PC-3 (cell line): ENCODE measurements at regions of chr12 and their contacts with region 1.

Region 1: GRCh38 chr12:39252628-39253027 is 190.3 kb downstream of the KIF21A start:
- DNase-seq: no peak
- ATAC-seq: no peak
- H3K4me3 ChIP-seq: no peak overlapping the region
- H3K27ac ChIP-seq: no peak overlapping the region
- H3K4me1 ChIP-seq: no peaks in the 10 kb centered on the region
- H3K27me3 ChIP-seq: no peaks in the 10 kb centered on the region
- CTCF ChIP-seq: no peak

Region 2: GRCh38 chr12:39145175-39145999 is 107.2 kb before region 1 on chr12:
- CTCF ChIA-PET with region 1: interaction called, 6 read pairs
- POLR2A ChIA-PET with region 1: no interaction called
- intact Hi-C with region 1: loop called (anchors 5 kb)
- DNase-seq: peak; percentile 70
- ATAC-seq: peak; percentile 99
- H3K4me3 ChIP-seq: peak overlapping the region; percentile 67
- H3K27ac ChIP-seq: no peak overlapping the region
- H3K4me1 ChIP-seq: peaks cover 3% of the 10 kb centered on the region; the same call in 1 of the 2 replicates
- H3K27me3 ChIP-seq: no peaks in the 10 kb centered on the region
- CTCF ChIP-seq: peak; percentile 80